CD4-positive, alpha-beta T cell (primary cell): ENCODE measurements at regions of chr16 and their contacts with region 1.

Region 1: GRCh38 chr16:13919683-13920509 is at the start of gene ERCC4:
- DNase-seq: peak; percentile 98 to 100 (median 99)
- ATAC-seq: peak; percentile 94
- H3K4me3 ChIP-seq: peak within 1 kb of the TSS; percentile 94
- H3K4me3 Mint-ChIP-seq: peak within 1 kb of the TSS; percentile 80
- H3K27ac ChIP-seq: peak within 1 kb of the TSS; percentile 57 to 62
- H3K27ac Mint-ChIP-seq: peak within 1 kb of the TSS; percentile 47
- H3K4me1 ChIP-seq: peaks cover 21% of the 10 kb centered on the region
- H3K4me1 Mint-ChIP-seq: peaks cover 29% of the 10 kb centered on the region
- H3K27me3 ChIP-seq: no peaks in the 10 kb centered on the region
- H3K27me3 Mint-ChIP-seq: no peaks in the 10 kb centered on the region
- CTCF ChIP-seq: peak; percentile 93
- total RNA-seq, gene ERCC4: 8.5 to 10.1 TPM

Region 2: DNA sequence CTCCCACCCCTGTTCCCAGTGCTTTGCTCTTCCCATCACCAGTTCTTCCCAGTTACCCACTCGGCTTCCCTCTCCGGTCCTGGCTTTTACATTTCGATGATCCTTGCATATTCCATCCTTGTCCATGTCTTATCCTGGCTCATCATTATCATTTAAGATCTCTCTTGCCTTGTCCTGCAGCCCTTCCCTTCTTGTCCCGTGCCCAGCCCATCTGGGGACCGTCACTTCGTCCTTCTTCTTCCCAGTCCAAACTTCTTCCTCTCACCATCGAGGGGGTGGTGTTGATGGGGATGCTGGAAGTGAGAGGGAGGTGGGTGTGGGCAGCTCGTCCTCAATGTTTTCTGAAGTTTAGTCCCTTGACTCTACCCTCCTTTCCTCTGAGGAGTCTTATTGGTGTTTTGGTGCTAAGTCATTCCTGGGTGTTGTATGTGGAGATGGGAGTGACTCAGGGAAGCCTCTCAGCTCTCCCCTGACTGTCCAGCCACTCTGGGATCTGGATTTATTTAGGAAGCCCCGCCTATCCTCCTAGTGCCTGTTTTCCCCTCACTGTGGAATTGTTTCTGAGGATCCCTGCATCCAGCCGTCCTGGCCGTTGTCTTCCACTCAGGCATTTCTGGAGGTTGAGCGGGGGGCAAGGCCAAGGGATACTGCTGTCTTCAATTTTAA is 1942.4 kb before region 1 on chr16:
- CTCF ChIA-PET with region 1: no interaction called
- POLR2A ChIA-PET with region 1: no interaction called
- intact Hi-C with region 1: loop called in 1 of 2 experiments (anchors 10 kb)
- DNase-seq: peak in 2 of 14 experiments; percentile 7 to 9
- ATAC-seq: no peak
- H3K4me3 ChIP-seq: peak overlapping the region; percentile 99
- H3K4me3 Mint-ChIP-seq: peak overlapping the region; percentile 96
- H3K27ac ChIP-seq: no peak overlapping the region
- H3K27ac Mint-ChIP-seq: peak overlapping the region; percentile 81
- H3K4me1 ChIP-seq: peaks cover 25% of the 10 kb centered on the region
- H3K4me1 Mint-ChIP-seq: peaks cover 40% of the 10 kb centered on the region
- H3K27me3 ChIP-seq: no peaks in the 10 kb centered on the region
- H3K27me3 Mint-ChIP-seq: no peaks in the 10 kb centered on the region
- CTCF ChIP-seq: no peak

Region 3: DNA sequence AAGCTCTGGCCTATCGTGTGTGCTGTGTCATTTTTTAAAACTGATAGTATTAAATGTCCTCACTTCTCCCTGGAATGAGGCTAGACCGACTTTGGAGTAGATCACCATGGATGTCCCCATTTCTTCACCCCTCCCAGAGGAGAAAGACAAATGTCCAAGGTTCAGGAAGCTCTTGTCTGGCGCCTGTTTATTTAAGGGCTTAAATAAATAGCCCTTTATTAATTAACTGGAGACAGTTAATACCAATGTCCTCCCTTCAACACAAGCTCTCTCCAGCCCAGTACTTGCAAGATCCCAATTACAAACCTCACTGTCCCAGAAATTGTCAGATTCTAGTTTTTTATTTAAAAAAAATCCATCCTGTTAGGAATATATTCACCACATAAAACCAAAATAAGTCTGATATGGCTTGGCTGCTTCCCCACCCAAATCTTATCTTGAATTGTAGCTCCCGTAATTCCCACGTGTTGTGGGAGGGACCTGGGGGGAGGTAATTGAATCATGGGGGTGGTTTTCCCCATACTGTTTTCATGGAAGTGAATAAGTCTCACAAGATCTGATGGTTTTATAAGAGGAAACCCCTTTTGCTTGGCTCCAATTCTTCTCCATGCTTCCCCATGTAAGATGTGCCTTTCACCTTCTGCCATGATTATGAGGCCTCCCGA is 674.1 kb before region 1 on chr16:
- CTCF ChIA-PET with region 1: no interaction called
- POLR2A ChIA-PET with region 1: no interaction called
- intact Hi-C with region 1: no loop called
- DNase-seq: no peak
- ATAC-seq: no peak
- H3K4me3 ChIP-seq: no peak overlapping the region
- H3K4me3 Mint-ChIP-seq: no peak overlapping the region
- H3K27ac ChIP-seq: no peak overlapping the region
- H3K27ac Mint-ChIP-seq: no peak overlapping the region
- H3K4me1 ChIP-seq: no peaks in the 10 kb centered on the region
- H3K4me1 Mint-ChIP-seq: no peaks in the 10 kb centered on the region
- H3K27me3 ChIP-seq: no peaks in the 10 kb centered on the region
- H3K27me3 Mint-ChIP-seq: peaks cover 6% of the 10 kb centered on the region
- CTCF ChIP-seq: no peak

Region 4: GRCh38 chr16:13866073-13866472 is 53.8 kb before region 1 on chr16:
- CTCF ChIA-PET with region 1: no interaction called
- POLR2A ChIA-PET with region 1: no interaction called
- intact Hi-C with region 1: loop called in 1 of 2 experiments (anchors 5 kb)
- DNase-seq: peak in 12 of 14 experiments; percentile 0 to 54 (median 18)
- ATAC-seq: no peak
- H3K4me3 ChIP-seq: no peak overlapping the region
- H3K4me3 Mint-ChIP-seq: no peak overlapping the region
- H3K27ac ChIP-seq: no peak overlapping the region
- H3K27ac Mint-ChIP-seq: no peak overlapping the region
- H3K4me1 ChIP-seq: no peaks in the 10 kb centered on the region
- H3K4me1 Mint-ChIP-seq: no peaks in the 10 kb centered on the region
- H3K27me3 ChIP-seq: peaks cover 6 to 9% of the 10 kb centered on the region in 2 experiments
- H3K27me3 Mint-ChIP-seq: peaks cover 40% of the 10 kb centered on the region
- CTCF ChIP-seq: peak; percentile 61

Region 5: GRCh38 chr16:14070877-14071575 is 151.1 kb after region 1 on chr16 and contains the start of gene MRTFB:
- CTCF ChIA-PET with region 1: interaction called, 3 read pairs
- POLR2A ChIA-PET with region 1: interaction called, 5 read pairs
- intact Hi-C with region 1: loop called in 1 of 2 experiments (anchors 5 kb)
- DNase-seq: peak; percentile 63 to 90 (median 76)
- ATAC-seq: peak; percentile 90
- H3K4me3 ChIP-seq: peak within 1 kb of the TSS; percentile 84
- H3K4me3 Mint-ChIP-seq: peak within 1 kb of the TSS; percentile 93
- H3K27ac ChIP-seq: peak within 1 kb of the TSS in 1 of 2 donors; percentile 69
- H3K27ac Mint-ChIP-seq: peak within 1 kb of the TSS; percentile 82
- H3K4me1 ChIP-seq: peaks cover 17% of the 10 kb centered on the region
- H3K4me1 Mint-ChIP-seq: peaks cover 39% of the 10 kb centered on the region
- H3K27me3 ChIP-seq: peaks cover 0 to 3% of the 10 kb centered on the region in 2 experiments
- H3K27me3 Mint-ChIP-seq: no peaks in the 10 kb centered on the region
- CTCF ChIP-seq: no peak
- total RNA-seq, gene MRTFB: 18.0 to 19.4 TPM

Region 6: GRCh38 chr16:14249291-14250032 is 329.6 kb after region 1 on chr16:
- CTCF ChIA-PET with region 1: no interaction called
- POLR2A ChIA-PET with region 1: no interaction called
- intact Hi-C with region 1: loop called (anchors 2 to 5 kb)
- DNase-seq: peak; percentile 11 to 69 (median 37)
- ATAC-seq: no peak
- H3K4me3 ChIP-seq: no peak overlapping the region
- H3K4me3 Mint-ChIP-seq: no peak overlapping the region
- H3K27ac ChIP-seq: no peak overlapping the region
- H3K27ac Mint-ChIP-seq: no peak overlapping the region
- H3K4me1 ChIP-seq: no peaks in the 10 kb centered on the region
- H3K4me1 Mint-ChIP-seq: no peaks in the 10 kb centered on the region
- H3K27me3 ChIP-seq: no peaks in the 10 kb centered on the region
- H3K27me3 Mint-ChIP-seq: no peaks in the 10 kb centered on the region
- CTCF ChIP-seq: peak; percentile 90

Region 7: GRCh38 chr16:14529010-14529669 is 609.2 kb after region 1 on chr16:
- CTCF ChIA-PET with region 1: no interaction called
- POLR2A ChIA-PET with region 1: no interaction called
- intact Hi-C with region 1: loop called (anchors 1 to 5 kb)
- DNase-seq: peak; percentile 24 to 76 (median 42)
- ATAC-seq: peak; percentile 48
- H3K4me3 ChIP-seq: no peak overlapping the region
- H3K4me3 Mint-ChIP-seq: no peak overlapping the region
- H3K27ac ChIP-seq: no peak overlapping the region
- H3K27ac Mint-ChIP-seq: no peak overlapping the region
- H3K4me1 ChIP-seq: peaks cover 2% of the 10 kb centered on the region
- H3K4me1 Mint-ChIP-seq: no peaks in the 10 kb centered on the region
- H3K27me3 ChIP-seq: no peaks in the 10 kb centered on the region
- H3K27me3 Mint-ChIP-seq: no peaks in the 10 kb centered on the region
- CTCF ChIP-seq: peak; percentile 69

Region 8: DNA sequence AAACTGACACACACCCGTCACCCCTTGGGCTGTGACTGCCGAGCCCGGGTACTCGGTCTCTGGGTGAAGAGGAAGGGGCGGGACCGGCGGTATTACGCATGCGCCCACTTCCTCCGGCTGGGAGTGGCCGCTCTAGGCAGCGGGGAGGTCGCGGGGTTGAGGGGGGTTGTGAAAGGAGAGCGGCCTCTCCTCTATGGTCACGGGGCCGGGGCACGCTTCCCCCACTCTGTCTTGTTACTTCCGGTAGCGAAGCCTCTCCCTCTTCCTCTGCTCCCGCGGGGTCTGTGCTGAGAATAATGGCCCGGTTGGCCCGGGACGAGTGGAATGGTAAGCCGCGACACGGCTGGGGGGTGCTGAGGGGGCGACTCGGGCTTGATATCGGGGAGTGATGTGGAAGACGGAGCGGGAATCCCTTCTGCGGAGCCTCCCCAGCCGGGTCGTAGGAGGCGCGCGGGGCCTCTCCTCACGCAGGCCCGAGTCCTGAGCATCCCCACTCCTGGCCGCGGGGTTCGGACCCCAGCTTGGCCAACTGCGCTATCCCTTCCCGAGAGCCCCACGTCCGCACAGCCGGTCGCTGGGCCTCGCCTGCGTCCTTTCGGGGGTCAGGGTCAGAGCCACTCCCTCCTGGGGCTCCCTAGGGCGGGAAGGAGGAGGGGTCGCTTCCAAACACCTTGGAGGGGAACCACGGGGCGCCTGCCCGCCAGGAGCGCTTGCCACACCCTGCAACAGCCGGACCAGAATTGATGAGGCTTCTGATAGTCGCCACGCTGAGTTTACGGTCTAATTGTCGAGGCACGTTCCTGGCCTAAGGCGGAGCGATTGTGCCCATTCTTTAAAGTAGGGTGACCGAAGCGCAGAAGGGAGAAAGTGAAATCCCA is 713.0 kb after region 1 on chr16 and contains the start of gene BFAR:
- CTCF ChIA-PET with region 1: interaction called, 3 read pairs
- POLR2A ChIA-PET with region 1: interaction called, 9 read pairs
- intact Hi-C with region 1: loop called in 1 of 2 experiments (anchors 5 kb)
- DNase-seq: peak; percentile 98 to 100 (median 99)
- ATAC-seq: peak; percentile 70
- H3K4me3 ChIP-seq: peak within 1 kb of the TSS; percentile 98
- H3K4me3 Mint-ChIP-seq: peak within 1 kb of the TSS; percentile 100
- H3K27ac ChIP-seq: peak within 1 kb of the TSS; percentile 82 to 92
- H3K27ac Mint-ChIP-seq: peak within 1 kb of the TSS; percentile 93
- H3K4me1 ChIP-seq: peaks cover 65% of the 10 kb centered on the region
- H3K4me1 Mint-ChIP-seq: peaks cover 64% of the 10 kb centered on the region
- H3K27me3 ChIP-seq: no peaks in the 10 kb centered on the region
- H3K27me3 Mint-ChIP-seq: no peaks in the 10 kb centered on the region
- CTCF ChIP-seq: no peak
- total RNA-seq, gene BFAR: 36.9 to 37.6 TPM